ENCODE measurements at regions of chr5 and their contacts with region 1.

Region 1: GRCh38 chr5:142108432-142109330 is at the start of gene NDFIP1:
- DNase-seq: peak; percentile 72 to 94 (median 84)
- ATAC-seq: peak; percentile 70
- H3K4me3 ChIP-seq: peak within 1 kb of the TSS; percentile 75
- H3K4me3 Mint-ChIP-seq: peak within 1 kb of the TSS; percentile 95
- H3K27ac ChIP-seq: peak within 1 kb of the TSS; percentile 89 to 99
- H3K27ac Mint-ChIP-seq: peak within 1 kb of the TSS; percentile 98
- H3K4me1 ChIP-seq: peaks cover 41% of the 10 kb centered on the region
- H3K4me1 Mint-ChIP-seq: peaks cover 79% of the 10 kb centered on the region
- H3K27me3 ChIP-seq: no peaks in the 10 kb centered on the region
- H3K27me3 Mint-ChIP-seq: no peaks in the 10 kb centered on the region
- CTCF ChIP-seq: no peak
- total RNA-seq, gene NDFIP1: 185 to 192 TPM

Region 2: DNA sequence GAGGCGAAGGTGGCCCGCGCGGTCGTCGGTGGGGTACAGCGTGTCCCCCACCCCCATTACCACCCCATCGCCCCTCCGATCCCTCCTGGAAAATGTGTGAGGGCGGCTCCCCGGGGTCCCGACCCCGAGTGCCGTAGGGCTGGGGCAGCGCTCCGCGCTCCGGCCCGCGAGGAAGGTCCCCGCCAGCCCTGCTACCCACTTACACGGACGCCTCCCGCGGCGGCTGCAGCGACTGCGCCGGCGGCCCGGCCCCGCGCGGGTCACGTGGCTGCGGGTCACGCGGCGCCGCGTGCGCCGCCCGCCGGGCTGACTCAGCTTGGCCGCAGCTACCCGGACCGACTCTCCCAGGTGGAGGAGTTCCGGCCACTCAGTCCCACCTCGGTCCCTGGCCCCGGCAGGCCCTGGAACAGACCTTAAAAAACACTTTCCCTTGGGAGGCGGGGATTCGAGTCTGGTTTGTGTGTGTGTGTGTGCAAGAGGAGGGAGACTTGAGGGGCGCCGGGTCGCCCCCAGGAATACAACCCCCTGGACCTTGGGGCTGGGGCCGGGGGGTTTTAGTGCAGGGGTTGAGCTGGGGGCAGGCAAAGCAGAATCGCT is 95.8 kb before region 1 on chr5 and contains the start of gene GNPDA1:
- CTCF ChIA-PET with region 1: interaction called, 13 read pairs
- POLR2A ChIA-PET with region 1: interaction called, 53 read pairs
- intact Hi-C with region 1: loop called (anchors 2 kb)
- DNase-seq: peak; percentile 24 to 87 (median 57)
- ATAC-seq: peak; percentile 60
- H3K4me3 ChIP-seq: peak within 1 kb of the TSS; percentile 86
- H3K4me3 Mint-ChIP-seq: peak within 1 kb of the TSS; percentile 90
- H3K27ac ChIP-seq: peak within 1 kb of the TSS; percentile 60 to 73
- H3K27ac Mint-ChIP-seq: peak within 1 kb of the TSS; percentile 89
- H3K4me1 ChIP-seq: peaks cover 67% of the 10 kb centered on the region
- H3K4me1 Mint-ChIP-seq: peaks cover 84% of the 10 kb centered on the region
- H3K27me3 ChIP-seq: no peaks in the 10 kb centered on the region
- H3K27me3 Mint-ChIP-seq: no peaks in the 10 kb centered on the region
- CTCF ChIP-seq: no peak
- total RNA-seq, gene GNPDA1: 5.8 to 6.6 TPM

Region 3: DNA sequence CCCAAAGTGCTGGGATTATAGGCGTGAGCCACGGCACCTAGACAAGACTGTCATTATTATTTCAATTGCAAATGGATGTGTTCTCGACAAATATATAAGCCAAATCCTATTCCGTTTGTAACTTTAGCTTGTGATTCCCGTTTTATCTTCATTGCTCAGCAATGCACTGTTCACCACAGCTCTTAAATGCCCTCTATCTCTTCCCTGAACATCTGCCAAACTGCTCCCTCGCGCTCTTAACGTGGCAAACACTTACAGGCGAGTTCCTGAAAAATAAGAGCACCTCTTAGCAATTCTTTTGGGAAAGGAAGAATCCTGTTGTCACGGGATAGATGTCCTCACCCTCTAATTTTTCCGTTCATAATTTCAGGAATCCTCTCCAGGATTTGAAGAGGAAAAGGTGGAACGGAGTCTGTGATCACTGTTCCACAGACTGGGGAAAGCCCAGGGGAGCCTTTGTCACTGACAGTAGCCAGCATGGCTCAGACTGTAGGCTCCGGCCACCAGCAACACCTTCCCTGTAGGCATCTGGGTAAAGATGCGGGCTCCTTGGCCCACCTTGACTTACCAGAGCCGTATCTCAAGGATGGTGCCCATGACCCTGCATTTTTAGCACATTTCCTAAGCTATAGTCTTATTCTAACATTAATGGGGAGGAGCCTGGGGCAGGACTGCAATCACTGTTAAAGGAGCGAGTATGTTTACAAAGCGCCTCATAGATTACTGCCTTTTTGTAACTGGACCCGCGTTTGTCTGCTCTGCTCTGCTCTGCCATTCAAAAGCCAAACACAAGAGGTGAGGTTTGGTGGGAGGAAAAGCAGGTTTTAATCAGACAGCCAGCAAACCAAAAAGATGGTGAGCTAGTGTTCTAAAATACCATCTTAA is 75.7 kb before region 1 on chr5:
- CTCF ChIA-PET with region 1: interaction called, 3 read pairs
- POLR2A ChIA-PET with region 1: interaction called, 10 read pairs
- intact Hi-C with region 1: no loop called
- DNase-seq: no peak
- ATAC-seq: no peak
- H3K4me3 ChIP-seq: no peak overlapping the region
- H3K4me3 Mint-ChIP-seq: no peak overlapping the region
- H3K27ac ChIP-seq: no peak overlapping the region
- H3K27ac Mint-ChIP-seq: no peak overlapping the region
- H3K4me1 ChIP-seq: peaks cover 18% of the 10 kb centered on the region
- H3K4me1 Mint-ChIP-seq: peaks cover 21% of the 10 kb centered on the region
- H3K27me3 ChIP-seq: no peaks in the 10 kb centered on the region
- H3K27me3 Mint-ChIP-seq: no peaks in the 10 kb centered on the region
- CTCF ChIP-seq: no peak

Region 4: DNA sequence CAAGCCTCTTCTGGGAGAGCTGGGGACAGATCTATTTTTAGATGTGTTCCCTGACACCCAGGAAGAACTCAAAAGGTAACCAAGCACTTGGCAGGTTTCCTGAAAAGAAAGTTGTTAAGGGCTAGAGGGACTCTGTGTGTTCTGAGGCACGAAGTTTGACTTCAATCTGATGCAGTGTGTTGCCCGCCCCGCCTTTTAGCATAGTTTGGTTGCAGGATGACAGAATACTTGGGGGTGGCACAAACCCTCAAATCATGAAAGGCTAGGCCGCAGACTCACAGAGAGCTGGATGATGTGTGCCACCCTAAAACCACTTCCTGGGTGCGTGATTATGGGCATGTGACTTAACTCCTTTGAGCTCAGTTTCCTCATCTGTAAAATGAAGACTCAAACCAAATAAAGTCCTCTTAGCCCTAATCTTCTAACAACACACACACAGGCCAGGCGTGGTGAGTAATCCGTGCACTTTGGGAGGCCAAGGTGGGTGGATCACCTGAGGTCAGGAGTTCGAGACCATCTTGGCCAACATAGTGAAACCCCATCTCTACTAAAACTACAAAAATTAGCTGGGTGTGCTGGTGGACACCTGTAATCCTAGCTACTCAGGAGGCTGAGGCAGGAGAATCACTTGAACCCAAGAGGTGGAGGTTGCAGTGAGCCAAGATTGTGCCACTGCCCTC is 12.9 kb before region 1 on chr5:
- CTCF ChIA-PET with region 1: interaction called, 8 read pairs
- POLR2A ChIA-PET with region 1: interaction called, 197 read pairs
- intact Hi-C with region 1: loop called in 1 of 2 experiments (anchors 1 kb)
- DNase-seq: peak; percentile 67 to 96 (median 76)
- ATAC-seq: peak; percentile 85
- H3K4me3 ChIP-seq: no peak overlapping the region
- H3K4me3 Mint-ChIP-seq: peak overlapping the region; percentile 28
- H3K27ac ChIP-seq: peak overlapping the region; percentile 71 to 75
- H3K27ac Mint-ChIP-seq: peak overlapping the region; percentile 94
- H3K4me1 ChIP-seq: peaks cover 61% of the 10 kb centered on the region
- H3K4me1 Mint-ChIP-seq: peaks cover 70% of the 10 kb centered on the region
- H3K27me3 ChIP-seq: no peaks in the 10 kb centered on the region
- H3K27me3 Mint-ChIP-seq: no peaks in the 10 kb centered on the region
- CTCF ChIP-seq: no peak

Region 5: GRCh38 chr5:142128675-142129208 is 20.1 kb after region 1 on chr5:
- CTCF ChIA-PET with region 1: interaction called, 3 read pairs
- POLR2A ChIA-PET with region 1: interaction called, 19 read pairs
- intact Hi-C with region 1: loop called in 1 of 2 experiments (anchors 2 kb)
- DNase-seq: peak in 1 of 14 experiments; percentile 48
- ATAC-seq: peak; percentile 61
- H3K4me3 ChIP-seq: no peak overlapping the region
- H3K4me3 Mint-ChIP-seq: peak overlapping the region; percentile 49
- H3K27ac ChIP-seq: no peak overlapping the region
- H3K27ac Mint-ChIP-seq: peak overlapping the region; percentile 55
- H3K4me1 ChIP-seq: peaks cover 38% of the 10 kb centered on the region
- H3K4me1 Mint-ChIP-seq: peaks cover 68% of the 10 kb centered on the region
- H3K27me3 ChIP-seq: no peaks in the 10 kb centered on the region
- H3K27me3 Mint-ChIP-seq: no peaks in the 10 kb centered on the region
- CTCF ChIP-seq: no peak

Measured in CD4-positive, alpha-beta T cell (primary cell).